HEK293 (cell line): ENCODE measurements at regions of chr17 and their contacts with region 1.

Region 1: GRCh38 chr17:73192894-73193701 is at the start of gene COG1:
- H3K4me3 ChIP-seq: peak within 1 kb of the TSS; percentile 93
- H3K27ac ChIP-seq: peak within 1 kb of the TSS; percentile 98
- H3K4me1 ChIP-seq: peaks cover 3% of the 10 kb centered on the region; the same call in 1 of the 2 replicates
- CTCF ChIP-seq: peak; percentile 73; the same call in 1 of the 2 replicates

Region 2: GRCh38 chr17:73179878-73180277 is 13.2 kb before region 1 on chr17:
- CTCF ChIA-PET with region 1: interaction called, 13 read pairs
- POLR2A ChIA-PET with region 1: no interaction called
- H3K4me3 ChIP-seq: no peak overlapping the region
- H3K27ac ChIP-seq: no peak overlapping the region
- H3K4me1 ChIP-seq: no peaks in the 10 kb centered on the region
- CTCF ChIP-seq: no peak

Region 3: GRCh38 chr17:73215447-73215846 is 22.3 kb after region 1 on chr17:
- CTCF ChIA-PET with region 1: interaction called, 12 read pairs
- POLR2A ChIA-PET with region 1: no interaction called
- H3K4me3 ChIP-seq: no peak overlapping the region
- H3K27ac ChIP-seq: no peak overlapping the region
- H3K4me1 ChIP-seq: peaks cover 2% of the 10 kb centered on the region; the same call in 1 of the 2 replicates
- CTCF ChIP-seq: no peak

Region 4: DNA sequence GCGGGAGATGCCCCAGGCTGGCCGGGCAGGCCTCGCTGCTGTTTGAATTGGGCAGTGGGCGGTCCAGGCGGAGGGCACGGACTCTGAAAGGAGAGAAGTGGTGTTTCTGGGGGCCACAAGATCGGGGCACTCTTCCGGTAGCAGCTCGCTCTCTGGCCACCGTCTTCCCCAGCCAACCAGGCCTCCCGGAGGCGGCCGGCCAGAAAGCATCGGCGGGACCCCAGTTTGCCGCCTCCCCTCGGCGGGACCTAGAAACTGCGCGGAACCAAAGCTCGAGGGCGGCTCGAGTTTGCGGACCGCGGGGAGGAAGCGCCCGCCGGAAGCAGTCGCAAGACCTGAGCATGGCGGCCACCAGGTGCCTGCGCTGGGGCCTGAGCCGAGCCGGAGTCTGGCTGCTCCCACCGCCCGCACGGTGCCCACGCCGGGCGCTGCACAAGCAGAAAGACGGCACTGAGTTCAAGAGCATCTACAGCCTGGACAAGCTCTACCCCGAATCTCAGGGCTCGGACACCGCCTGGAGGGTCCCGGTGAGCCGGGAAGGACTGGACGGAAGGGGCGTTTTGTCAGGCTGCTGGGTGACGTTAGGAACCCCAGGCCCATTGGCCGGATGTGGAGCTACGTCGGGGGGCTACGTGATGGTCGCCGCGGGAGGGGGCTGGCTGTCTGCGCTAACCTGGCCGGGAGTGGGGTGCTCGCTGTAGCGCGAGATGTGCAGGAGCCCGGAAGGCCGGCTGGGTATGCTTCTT is 1819.4 kb after region 1 on chr17 and contains the start of gene MRPL58:
- CTCF ChIA-PET with region 1: no interaction called
- POLR2A ChIA-PET with region 1: no interaction called
- H3K4me3 ChIP-seq: peak within 1 kb of the TSS; percentile 81
- H3K27ac ChIP-seq: peak within 1 kb of the TSS; percentile 83
- H3K4me1 ChIP-seq: peaks cover 26% of the 10 kb centered on the region
- CTCF ChIP-seq: peak; percentile 97